ENCODE measurements at regions of chr4 and their contacts with region 1.

Region 1: DNA sequence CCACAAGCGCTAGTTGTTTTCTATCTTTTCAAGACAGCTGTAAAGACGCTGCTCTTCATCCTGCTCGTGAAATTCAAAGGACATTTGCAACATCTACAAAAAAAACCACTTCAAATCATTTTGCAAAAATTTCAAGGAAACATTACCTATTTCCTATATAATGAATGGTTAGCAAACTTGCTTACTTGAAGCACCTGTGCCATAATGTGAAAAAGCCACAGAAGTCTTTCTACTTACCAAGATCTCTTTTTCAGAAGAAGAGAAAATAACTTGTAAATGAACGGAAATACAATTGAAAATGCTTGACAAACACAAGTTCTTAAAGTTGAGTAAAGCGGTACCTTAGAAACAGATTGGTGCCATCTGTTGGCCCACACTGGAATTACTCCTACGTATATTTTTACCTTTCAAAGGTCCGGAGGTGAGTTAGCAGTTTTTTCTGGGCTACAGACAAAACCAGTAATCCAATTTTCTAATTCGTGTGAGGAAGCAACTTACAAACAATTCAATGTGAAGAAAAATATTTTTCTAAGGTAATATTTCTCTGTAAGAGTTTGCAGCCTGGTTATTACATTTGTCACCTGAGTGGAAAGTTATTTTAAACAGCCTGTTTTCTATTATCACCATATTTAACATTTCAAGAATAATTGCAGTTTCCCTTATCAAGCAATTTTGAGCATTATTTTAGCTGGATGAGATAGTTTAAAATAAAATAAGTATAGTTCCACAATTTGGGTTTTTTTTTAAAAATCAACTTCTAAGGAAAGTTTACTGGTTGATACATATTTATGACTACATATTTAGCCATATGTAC is at the start of gene TLR6:
- DNase-seq: peak; percentile 71
- H3K4me3 ChIP-seq: no peak within 1 kb of the TSS
- H3K27ac ChIP-seq: peak within 1 kb of the TSS; percentile 59
- H3K4me1 ChIP-seq: no peaks in the 10 kb centered on the region
- H3K27me3 ChIP-seq: no peaks in the 10 kb centered on the region
- CTCF ChIP-seq: peak; percentile 89
- total RNA-seq, gene TLR6: 0.44 to 2.2 TPM

Region 2: GRCh38 chr4:38759113-38759789 is 97.5 kb before region 1 on chr4:
- intact Hi-C with region 1: loop called (anchors 5 kb)
- DNase-seq: peak; percentile 71
- H3K4me3 ChIP-seq: no peak overlapping the region
- H3K27ac ChIP-seq: no peak overlapping the region
- H3K4me1 ChIP-seq: no peaks in the 10 kb centered on the region
- H3K27me3 ChIP-seq: no peaks in the 10 kb centered on the region
- CTCF ChIP-seq: peak; percentile 68